Pancreas (tissue), 10 donors: ENCODE measurements at regions of chr12 and their contacts with region 1.

Region 1: GRCh38 chr12:98154850-98155249 is 360.5 kb upstream of the TMPO start:
- DNase-seq: no peak
- ATAC-seq: peak in 3 of 4 donors; percentile 60 to 71 (median 65)
- H3K4me3 ChIP-seq: no peak overlapping the region
- H3K27ac ChIP-seq: no peak overlapping the region
- H3K4me1 ChIP-seq: no peaks in the 10 kb centered on the region
- H3K27me3 ChIP-seq: no peaks in the 10 kb centered on the region
- CTCF ChIP-seq: peak in 1 of 4 donors; percentile 7

Region 2: GRCh38 chr12:98345308-98345876 is 190.5 kb after region 1 on chr12:
- intact Hi-C with region 1: loop called in 1 of 3 experiments (anchors 10 kb)
- DNase-seq: no peak
- ATAC-seq: no peak
- H3K4me3 ChIP-seq: no peak overlapping the region
- H3K27ac ChIP-seq: no peak overlapping the region
- H3K4me1 ChIP-seq: no peaks in the 10 kb centered on the region
- H3K27me3 ChIP-seq: no peaks in the 10 kb centered on the region
- CTCF ChIP-seq: no peak